PC-9 (cell line): ENCODE measurements at regions of chr6 and their contacts with region 1.

Region 1: DNA sequence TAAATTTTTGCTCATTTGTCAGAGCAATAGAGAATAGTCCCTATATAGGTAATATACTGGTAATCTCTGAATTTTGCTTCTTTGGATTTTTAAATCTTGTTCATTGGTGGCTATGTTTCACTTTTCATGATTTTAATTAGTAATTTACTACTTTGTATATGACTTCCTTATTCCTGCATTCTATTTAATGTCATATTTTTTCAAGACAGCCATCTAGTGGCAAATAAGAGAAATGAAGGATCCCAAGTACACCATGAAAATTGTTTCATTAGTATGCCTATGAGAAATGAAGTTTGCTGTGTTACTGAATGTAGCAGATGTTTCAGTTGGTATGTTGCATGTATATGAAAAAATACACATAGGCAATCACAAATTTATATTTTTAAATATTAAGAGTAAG is 82.4 kb downstream of the ZNF292 start:
- DNase-seq: no peak
- H3K4me3 ChIP-seq: no peak overlapping the region
- H3K27ac ChIP-seq: no peak overlapping the region
- H3K4me1 ChIP-seq: no peaks in the 10 kb centered on the region
- H3K27me3 ChIP-seq: no peaks in the 10 kb centered on the region
- CTCF ChIP-seq: peak; percentile 63

Region 2: GRCh38 chr6:87066449-87067333 is 171.1 kb before region 1 on chr6:
- CTCF ChIA-PET with region 1: interaction called, 11 read pairs
- POLR2A ChIA-PET with region 1: no interaction called
- intact Hi-C with region 1: no loop called
- DNase-seq: peak in 1 of 2 experiments; percentile 26
- H3K4me3 ChIP-seq: no peak overlapping the region
- H3K27ac ChIP-seq: no peak overlapping the region
- H3K4me1 ChIP-seq: no peaks in the 10 kb centered on the region
- H3K27me3 ChIP-seq: no peaks in the 10 kb centered on the region
- CTCF ChIP-seq: peak; percentile 77

Region 3: GRCh38 chr6:87139236-87139635 is 98.6 kb before region 1 on chr6:
- CTCF ChIA-PET with region 1: no interaction called
- POLR2A ChIA-PET with region 1: no interaction called
- intact Hi-C with region 1: loop called (anchors 5 kb)
- DNase-seq: peak in 1 of 2 experiments; percentile 23
- H3K4me3 ChIP-seq: no peak overlapping the region
- H3K27ac ChIP-seq: no peak overlapping the region
- H3K4me1 ChIP-seq: no peaks in the 10 kb centered on the region
- H3K27me3 ChIP-seq: no peaks in the 10 kb centered on the region
- CTCF ChIP-seq: peak; percentile 78

Region 4: GRCh38 chr6:87154993-87155841 is 82.6 kb before region 1 on chr6 and contains the start of gene ZNF292:
- CTCF ChIA-PET with region 1: no interaction called
- POLR2A ChIA-PET with region 1: no interaction called
- intact Hi-C with region 1: loop called (anchors 5 kb)
- DNase-seq: peak; percentile 82 to 95
- H3K4me3 ChIP-seq: peak within 1 kb of the TSS; percentile 58
- H3K27ac ChIP-seq: peak within 1 kb of the TSS; percentile 51
- H3K4me1 ChIP-seq: peaks cover 17% of the 10 kb centered on the region
- H3K27me3 ChIP-seq: no peaks in the 10 kb centered on the region
- CTCF ChIP-seq: no peak
- total RNA-seq, gene ZNF292: 29.2 and 34.1 TPM in 2 replicates

Region 5: GRCh38 chr6:87682310-87682709 is 444.5 kb after region 1 on chr6:
- CTCF ChIA-PET with region 1: no interaction called
- POLR2A ChIA-PET with region 1: no interaction called
- intact Hi-C with region 1: no loop called
- DNase-seq: no peak
- H3K4me3 ChIP-seq: no peak overlapping the region
- H3K27ac ChIP-seq: no peak overlapping the region
- H3K4me1 ChIP-seq: no peaks in the 10 kb centered on the region
- H3K27me3 ChIP-seq: no peaks in the 10 kb centered on the region
- CTCF ChIP-seq: no peak